ENCODE measurements at regions of chr7 and their contacts with region 1.

Region 1: GRCh38 chr7:19747740-19748339 is 25.6 kb downstream of the TMEM196 start:
- DNase-seq: no peak
- ATAC-seq: peak; percentile 25
- H3K4me3 Mint-ChIP-seq: no peak overlapping the region
- H3K27ac Mint-ChIP-seq: no peak overlapping the region
- H3K4me1 Mint-ChIP-seq: no peaks in the 10 kb centered on the region
- H3K27me3 Mint-ChIP-seq: peaks cover 6% of the 10 kb centered on the region
- CTCF ChIP-seq: no peak

Region 2: GRCh38 chr7:19713676-19714075 is 34.2 kb before region 1 on chr7:
- CTCF ChIA-PET with region 1: interaction called, 15 read pairs
- POLR2A ChIA-PET with region 1: interaction called, 3 read pairs
- intact Hi-C with region 1: loop called (anchors 1 kb)
- DNase-seq: no peak
- ATAC-seq: no peak
- H3K4me3 Mint-ChIP-seq: no peak overlapping the region
- H3K27ac Mint-ChIP-seq: no peak overlapping the region
- H3K4me1 Mint-ChIP-seq: peaks cover 14% of the 10 kb centered on the region
- H3K27me3 Mint-ChIP-seq: peaks cover 9% of the 10 kb centered on the region
- CTCF ChIP-seq: no peak

Region 3: GRCh38 chr7:20647908-20648776 is 900.3 kb after region 1 on chr7:
- CTCF ChIA-PET with region 1: interaction called, 3 read pairs
- POLR2A ChIA-PET with region 1: no interaction called
- intact Hi-C with region 1: loop called (anchors 1 kb)
- DNase-seq: no peak
- ATAC-seq: no peak
- H3K4me3 Mint-ChIP-seq: no peak overlapping the region
- H3K27ac Mint-ChIP-seq: no peak overlapping the region
- H3K4me1 Mint-ChIP-seq: no peaks in the 10 kb centered on the region
- H3K27me3 Mint-ChIP-seq: peaks cover 5% of the 10 kb centered on the region
- CTCF ChIP-seq: no peak

Measured in activated B cell treated with CpG ODN at 0.5 μM for 24 hours (primary cell).